Panc1 (cell line): ENCODE measurements at regions of chr12 and their contacts with region 1.

Region 1: GRCh38 chr12:52980693-52981423 is 25.4 kb upstream of the EIF4B start:
- DNase-seq: peak; percentile 94
- ATAC-seq: peak; percentile 89
- H3K4me3 ChIP-seq: no peak overlapping the region
- H3K27ac ChIP-seq: peak overlapping the region; percentile 53
- H3K4me1 ChIP-seq: peaks cover 25% of the 10 kb centered on the region
- H3K27me3 ChIP-seq: no peaks in the 10 kb centered on the region
- CTCF ChIP-seq: peak; percentile 98

Region 2: DNA sequence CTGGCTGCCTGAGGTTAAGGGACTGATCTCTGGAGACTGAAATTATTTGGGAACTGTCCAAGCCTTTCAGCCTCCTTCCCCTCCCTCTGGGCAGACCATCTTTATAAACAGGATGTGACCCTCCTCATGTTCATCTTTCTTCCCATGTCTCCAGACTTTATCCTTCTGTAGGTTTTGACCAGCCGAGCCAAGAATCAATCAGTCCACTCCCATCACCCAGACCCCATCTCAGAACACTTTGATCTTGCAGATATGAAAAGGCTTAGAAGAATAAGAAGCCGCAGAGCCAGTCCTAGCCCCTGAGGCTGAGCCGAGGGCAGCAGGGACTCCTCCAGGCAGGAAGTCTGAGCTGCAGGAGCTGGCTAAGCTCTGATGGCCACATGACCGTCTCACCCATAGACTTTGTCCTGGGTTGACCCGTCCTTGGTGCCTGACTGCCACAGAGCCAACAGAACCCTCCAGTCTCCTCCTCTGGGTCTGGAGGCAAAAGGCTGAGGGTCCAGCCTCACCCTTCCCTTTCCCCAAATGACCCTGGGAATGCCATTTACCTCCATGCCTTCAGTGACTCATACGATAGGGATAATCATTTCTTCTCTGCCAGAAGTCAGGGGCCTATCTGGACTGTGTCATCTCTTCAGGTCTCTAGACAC is 429.5 kb before region 1 on chr12:
- CTCF ChIA-PET with region 1: no interaction called
- POLR2A ChIA-PET with region 1: no interaction called
- in situ Hi-C with region 1: no loop called
- intact Hi-C with region 1: no loop called
- DNase-seq: no peak
- ATAC-seq: no peak
- H3K4me3 ChIP-seq: no peak overlapping the region
- H3K27ac ChIP-seq: no peak overlapping the region
- H3K4me1 ChIP-seq: no peaks in the 10 kb centered on the region
- H3K27me3 ChIP-seq: peaks cover 10% of the 10 kb centered on the region
- CTCF ChIP-seq: no peak

Region 3: GRCh38 chr12:52860063-52860823 is 120.6 kb before region 1 on chr12:
- CTCF ChIA-PET with region 1: no interaction called
- POLR2A ChIA-PET with region 1: no interaction called
- in situ Hi-C with region 1: no loop called
- intact Hi-C with region 1: no loop called
- DNase-seq: no peak
- ATAC-seq: peak; percentile 53; the same call in 1 of the 2 replicates
- H3K4me3 ChIP-seq: no peak overlapping the region
- H3K27ac ChIP-seq: no peak overlapping the region
- H3K4me1 ChIP-seq: no peaks in the 10 kb centered on the region
- H3K27me3 ChIP-seq: no peaks in the 10 kb centered on the region; the same call in 1 of the 2 replicates
- CTCF ChIP-seq: no peak

Region 4: DNA sequence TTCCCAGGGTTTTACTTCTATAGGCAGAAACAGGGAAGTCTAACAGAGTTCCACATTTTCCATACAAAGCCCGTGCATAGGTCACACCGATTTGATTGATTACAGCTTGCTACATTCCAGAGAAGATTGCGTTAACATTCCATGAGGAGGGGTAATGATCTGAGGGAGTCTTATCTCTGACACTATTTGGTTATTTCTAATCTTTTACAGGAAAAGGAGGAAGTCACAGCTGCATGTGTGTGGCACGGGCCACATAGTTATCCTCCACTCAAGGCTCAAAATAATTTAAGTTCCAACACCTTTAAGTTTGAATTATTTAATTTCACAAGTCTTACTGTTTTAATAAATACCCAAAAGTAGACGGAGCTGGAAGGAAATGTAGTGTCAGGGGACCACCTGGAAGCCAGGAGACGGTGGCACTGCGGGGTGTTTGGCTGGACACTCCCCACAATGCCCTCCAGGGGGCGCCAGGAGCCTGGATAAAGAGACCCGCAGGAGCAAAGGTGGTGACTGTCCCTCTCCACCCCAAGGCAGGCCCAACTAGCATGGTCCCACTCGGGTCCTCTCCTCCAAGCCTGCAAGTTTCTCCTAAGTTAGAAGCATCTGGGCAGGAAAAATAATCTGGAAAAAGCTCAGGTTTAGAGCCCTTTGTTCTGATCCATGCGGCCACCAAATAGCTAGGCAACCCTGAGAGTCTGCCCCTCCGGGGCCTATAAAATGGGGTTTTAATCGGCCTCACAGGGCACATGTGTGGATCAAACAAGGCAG is 96.1 kb before region 1 on chr12:
- CTCF ChIA-PET with region 1: interaction called, 124 read pairs
- POLR2A ChIA-PET with region 1: interaction called, 5 read pairs
- in situ Hi-C with region 1: loop called (anchors 25 kb)
- intact Hi-C with region 1: loop called (anchors 1 kb)
- DNase-seq: no peak
- ATAC-seq: peak; percentile 86
- H3K4me3 ChIP-seq: no peak overlapping the region
- H3K27ac ChIP-seq: peak overlapping the region; percentile 83
- H3K4me1 ChIP-seq: peaks cover 17% of the 10 kb centered on the region
- H3K27me3 ChIP-seq: no peaks in the 10 kb centered on the region
- CTCF ChIP-seq: peak; percentile 94

Region 5: DNA sequence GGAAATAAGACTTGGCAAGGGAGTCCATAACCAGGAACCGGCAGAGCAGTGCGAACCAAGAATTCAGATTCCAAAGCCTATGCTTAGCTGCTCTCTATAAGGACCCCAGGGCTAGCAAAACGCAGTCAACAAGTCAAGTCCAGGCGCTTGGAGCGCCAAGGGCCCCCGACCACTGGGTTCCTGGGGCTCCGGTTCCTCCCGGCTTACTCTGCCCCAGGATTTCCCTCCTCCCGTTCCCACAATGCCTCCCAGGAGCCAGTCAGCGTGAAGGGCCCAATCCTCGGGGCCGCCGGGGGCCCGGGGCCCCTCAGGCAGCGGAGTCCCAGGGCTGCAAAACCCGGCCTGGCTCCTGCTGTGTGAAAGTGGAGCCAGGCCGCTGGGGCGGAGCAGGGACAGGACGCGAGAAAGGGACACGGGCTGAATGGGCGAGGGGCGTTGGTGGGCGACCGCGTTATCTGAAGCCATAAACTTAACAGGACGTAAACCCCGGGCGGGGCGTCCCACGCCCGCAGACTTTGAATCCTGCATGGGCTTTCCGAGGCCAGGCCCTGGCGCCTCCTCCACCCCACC is 77.5 kb before region 1 on chr12:
- CTCF ChIA-PET with region 1: interaction called, 22 read pairs
- POLR2A ChIA-PET with region 1: interaction called, 3 read pairs
- in situ Hi-C with region 1: loop called (anchors 25 kb)
- intact Hi-C with region 1: no loop called
- DNase-seq: no peak
- ATAC-seq: peak; percentile 44
- H3K4me3 ChIP-seq: peak overlapping the region; percentile 70 to 87
- H3K27ac ChIP-seq: peak overlapping the region; percentile 86
- H3K4me1 ChIP-seq: peaks cover 62% of the 10 kb centered on the region
- H3K27me3 ChIP-seq: no peaks in the 10 kb centered on the region
- CTCF ChIP-seq: no peak

Region 6: GRCh38 chr12:52956987-52957386 is 23.9 kb before region 1 on chr12:
- CTCF ChIA-PET with region 1: interaction called, 11 read pairs
- POLR2A ChIA-PET with region 1: interaction called, 6 read pairs
- in situ Hi-C with region 1: no loop called
- intact Hi-C with region 1: no loop called
- DNase-seq: no peak
- ATAC-seq: peak; percentile 23; the same call in 1 of the 2 replicates
- H3K4me3 ChIP-seq: no peak overlapping the region
- H3K27ac ChIP-seq: peak overlapping the region; percentile 75
- H3K4me1 ChIP-seq: peaks cover 28% of the 10 kb centered on the region
- H3K27me3 ChIP-seq: no peaks in the 10 kb centered on the region
- CTCF ChIP-seq: no peak

Region 7: GRCh38 chr12:53065975-53066931 is 85.4 kb after region 1 on chr12:
- CTCF ChIA-PET with region 1: interaction called, 10 read pairs
- POLR2A ChIA-PET with region 1: no interaction called
- in situ Hi-C with region 1: no loop called
- intact Hi-C with region 1: no loop called
- DNase-seq: no peak
- ATAC-seq: peak; percentile 83
- H3K4me3 ChIP-seq: no peak overlapping the region
- H3K27ac ChIP-seq: no peak overlapping the region
- H3K4me1 ChIP-seq: peaks cover 5% of the 10 kb centered on the region
- H3K27me3 ChIP-seq: no peaks in the 10 kb centered on the region
- CTCF ChIP-seq: peak; percentile 92